ENCODE measurements at regions of chr2 and their contacts with region 1.

Region 1: GRCh38 chr2:101793277-101793969 is 95.9 kb downstream of the MAP4K4 start:
- DNase-seq: no peak
- ATAC-seq: peak; percentile 24

Region 2: GRCh38 chr2:101442042-101442666 is 351.3 kb before region 1 on chr2:
- intact Hi-C with region 1: loop called (anchors 5 kb)
- DNase-seq: no peak
- ATAC-seq: no peak

Region 3: GRCh38 chr2:101823347-101823791 is 29.9 kb after region 1 on chr2:
- intact Hi-C with region 1: loop called (anchors 5 kb)
- DNase-seq: peak; percentile 43
- ATAC-seq: peak; percentile 69

Region 4: GRCh38 chr2:101900375-101900774 is 107.0 kb after region 1 on chr2:
- intact Hi-C with region 1: no loop called
- DNase-seq: no peak
- ATAC-seq: no peak

Measured in Right ventricle myocardium inferior (tissue), 1 donor.